Activated T-helper 1 cell treated with anti-CD3 and anti-CD28 coated beads, Interleukin-12 subunit alpha, Interleukin-12 subunit beta, Interleukin-2, Interleukin-4 antibody, amounts not matched to agents 30 ng/mL and 10 ng/mL and 1 ng/mL, durations not matched to agents 14 hours and 24 hours and 36 hours (primary cell): ENCODE measurements at regions of chr15 and their contacts with region 1.

Region 1: GRCh38 chr15:84761607-84762131 is 13.3 kb downstream of the ZNF592 start:
- DNase-seq: no peak
- H3K4me3 Mint-ChIP-seq: no peak overlapping the region
- H3K27ac Mint-ChIP-seq: no peak overlapping the region
- H3K4me1 Mint-ChIP-seq: peaks cover 27% of the 10 kb centered on the region
- H3K27me3 Mint-ChIP-seq: no peaks in the 10 kb centered on the region

Region 2: DNA sequence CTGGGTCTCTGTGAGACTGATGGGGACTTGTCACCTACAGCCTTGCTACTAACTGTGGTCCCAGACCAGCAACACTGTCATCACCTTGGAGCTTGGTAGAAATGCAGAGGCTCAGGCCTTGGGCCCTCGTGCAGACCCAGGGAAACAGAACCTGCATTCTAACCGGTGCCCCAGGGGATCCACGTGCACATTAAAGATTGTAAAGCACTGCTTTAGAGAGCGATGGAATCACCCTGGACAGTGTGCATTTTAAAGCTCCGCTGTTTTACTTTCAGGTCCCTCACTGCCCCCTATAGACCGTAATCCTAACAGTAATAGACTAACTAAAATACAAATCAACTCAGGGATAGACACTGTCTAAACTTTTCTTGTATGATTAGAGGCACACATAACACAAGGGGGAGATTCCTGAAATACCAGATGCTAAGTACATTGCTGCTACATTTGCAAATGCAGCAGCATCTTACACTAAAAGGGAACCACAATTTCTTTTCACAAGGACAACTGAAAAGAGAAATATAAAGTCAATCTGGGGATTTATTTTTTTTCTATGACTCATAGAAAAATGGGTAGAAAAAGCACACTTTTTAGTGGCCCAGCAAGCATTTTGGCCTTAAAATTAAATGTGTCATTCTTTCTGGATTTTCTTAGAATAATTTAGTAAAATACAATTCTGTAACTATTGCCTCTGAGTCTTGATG is 1325.1 kb before region 1 on chr15:
- intact Hi-C with region 1: no loop called
- DNase-seq: no peak
- H3K4me3 Mint-ChIP-seq: no peak overlapping the region
- H3K27ac Mint-ChIP-seq: no peak overlapping the region
- H3K4me1 Mint-ChIP-seq: peaks cover 6% of the 10 kb centered on the region
- H3K27me3 Mint-ChIP-seq: peaks cover 9% of the 10 kb centered on the region

Region 3: GRCh38 chr15:84669726-84670125 is 91.9 kb before region 1 on chr15:
- intact Hi-C with region 1: loop called (anchors 1 kb)
- DNase-seq: no peak
- H3K4me3 Mint-ChIP-seq: peak overlapping the region; percentile 8
- H3K27ac Mint-ChIP-seq: peak overlapping the region; percentile 79
- H3K4me1 Mint-ChIP-seq: peaks cover 44% of the 10 kb centered on the region
- H3K27me3 Mint-ChIP-seq: no peaks in the 10 kb centered on the region

Region 4: GRCh38 chr15:84685304-84685703 is 76.4 kb before region 1 on chr15:
- intact Hi-C with region 1: no loop called
- DNase-seq: no peak
- H3K4me3 Mint-ChIP-seq: no peak overlapping the region
- H3K27ac Mint-ChIP-seq: no peak overlapping the region
- H3K4me1 Mint-ChIP-seq: peaks cover 11% of the 10 kb centered on the region
- H3K27me3 Mint-ChIP-seq: no peaks in the 10 kb centered on the region

Region 5: DNA sequence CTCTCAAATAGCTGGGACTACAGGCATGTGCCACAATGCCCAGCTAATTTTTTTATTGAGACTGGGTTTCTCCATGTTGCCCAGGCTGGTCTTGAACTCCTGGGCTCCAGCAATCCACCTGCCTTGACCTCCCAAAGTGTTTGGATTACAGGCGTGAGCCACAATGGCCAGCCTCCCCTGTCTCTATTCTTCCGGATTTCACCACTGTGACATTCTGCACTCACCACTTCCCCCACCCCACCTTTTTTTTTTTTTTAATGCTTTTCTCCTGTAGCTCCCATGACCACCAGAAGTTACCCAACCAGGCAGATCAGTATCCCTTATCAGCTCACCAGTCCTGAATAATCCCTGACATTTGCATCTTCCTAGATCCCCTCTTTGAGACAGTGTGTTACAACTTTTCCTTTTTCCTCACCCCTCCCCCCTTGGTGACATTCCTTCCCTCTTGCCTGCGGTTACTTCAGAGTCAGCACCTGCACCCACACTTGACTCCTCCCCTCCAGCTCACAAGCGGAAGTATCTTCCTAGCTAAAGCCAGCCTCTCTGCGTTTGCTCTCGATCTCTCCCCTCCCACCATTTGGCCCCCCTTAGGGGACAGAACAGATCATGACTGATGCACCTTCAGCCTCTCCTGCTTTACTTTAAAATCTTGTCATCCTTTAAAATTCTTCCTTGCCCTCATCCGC is 26.7 kb before region 1 on chr15:
- intact Hi-C with region 1: loop called (anchors 1 kb)
- DNase-seq: peak; percentile 67
- H3K4me3 Mint-ChIP-seq: peak overlapping the region; percentile 74
- H3K27ac Mint-ChIP-seq: peak overlapping the region; percentile 93
- H3K4me1 Mint-ChIP-seq: peaks cover 48% of the 10 kb centered on the region
- H3K27me3 Mint-ChIP-seq: no peaks in the 10 kb centered on the region

Region 6: DNA sequence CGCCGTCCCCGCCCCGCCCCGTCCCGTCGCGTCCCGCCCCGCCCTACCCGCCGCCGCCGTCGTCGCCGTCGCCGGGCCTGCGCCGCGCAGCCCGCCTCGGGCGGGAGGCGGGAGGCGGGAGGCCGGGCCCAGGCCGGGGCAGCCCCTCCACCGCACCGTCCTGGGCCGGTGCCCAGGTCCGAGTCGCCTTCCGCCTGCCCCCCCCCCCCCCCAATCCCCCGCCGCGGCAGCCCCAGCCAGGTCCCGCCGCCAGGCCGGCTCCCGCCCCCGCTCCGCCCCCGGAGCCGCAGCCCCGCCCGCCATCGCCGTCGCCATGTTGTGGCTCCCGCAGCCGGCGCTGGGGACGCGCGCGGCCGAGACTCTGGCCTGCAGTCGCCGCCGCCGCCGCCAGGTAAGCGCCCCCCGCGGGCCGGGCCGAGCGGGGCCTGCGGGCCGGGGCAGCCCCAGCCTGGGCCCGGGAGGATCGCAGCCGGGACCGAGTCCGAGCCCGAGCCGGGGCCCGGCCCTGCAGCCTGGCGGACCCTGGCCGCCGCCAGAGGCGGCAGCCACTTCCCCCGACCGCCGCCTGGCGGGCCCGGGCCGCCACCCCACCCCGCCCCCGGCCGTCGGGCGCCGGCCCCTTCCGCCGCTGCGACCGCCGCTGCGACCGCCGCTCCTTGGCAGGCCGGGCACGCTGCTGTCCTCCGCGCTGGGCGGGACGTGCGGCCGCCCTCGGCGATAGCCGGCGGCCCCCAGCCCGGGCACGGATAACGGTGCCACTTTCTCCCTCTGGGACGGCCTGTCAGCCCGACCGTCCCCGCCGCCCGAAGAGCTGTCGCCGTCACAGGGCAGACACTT is 13.2 kb before region 1 on chr15 and contains the start of gene ZNF592:
- intact Hi-C with region 1: loop called (anchors 1 kb)
- DNase-seq: peak; percentile 75
- H3K4me3 Mint-ChIP-seq: peak within 1 kb of the TSS; percentile 91
- H3K27ac Mint-ChIP-seq: peak within 1 kb of the TSS; percentile 95
- H3K4me1 Mint-ChIP-seq: peaks cover 56% of the 10 kb centered on the region
- H3K27me3 Mint-ChIP-seq: no peaks in the 10 kb centered on the region
- total RNA-seq, gene ZNF592: 29.9 and 30.9 TPM in 2 replicates

Region 7: GRCh38 chr15:84863565-84864443 is 102.1 kb after region 1 on chr15:
- intact Hi-C with region 1: no loop called
- DNase-seq: no peak
- H3K4me3 Mint-ChIP-seq: no peak overlapping the region
- H3K27ac Mint-ChIP-seq: no peak overlapping the region
- H3K4me1 Mint-ChIP-seq: no peaks in the 10 kb centered on the region
- H3K27me3 Mint-ChIP-seq: peaks cover 3% of the 10 kb centered on the region